Astrocyte of the cerebellum (primary cell): ENCODE measurements at regions of chr5 and their contacts with region 1.

Region 1: GRCh38 chr5:96876292-96876850 is at the start of gene ERAP2:
- DNase-seq: peak; percentile 12
- H3K4me3 ChIP-seq: peak within 1 kb of the TSS; percentile 36
- CTCF ChIP-seq: no peak

Region 2: DNA sequence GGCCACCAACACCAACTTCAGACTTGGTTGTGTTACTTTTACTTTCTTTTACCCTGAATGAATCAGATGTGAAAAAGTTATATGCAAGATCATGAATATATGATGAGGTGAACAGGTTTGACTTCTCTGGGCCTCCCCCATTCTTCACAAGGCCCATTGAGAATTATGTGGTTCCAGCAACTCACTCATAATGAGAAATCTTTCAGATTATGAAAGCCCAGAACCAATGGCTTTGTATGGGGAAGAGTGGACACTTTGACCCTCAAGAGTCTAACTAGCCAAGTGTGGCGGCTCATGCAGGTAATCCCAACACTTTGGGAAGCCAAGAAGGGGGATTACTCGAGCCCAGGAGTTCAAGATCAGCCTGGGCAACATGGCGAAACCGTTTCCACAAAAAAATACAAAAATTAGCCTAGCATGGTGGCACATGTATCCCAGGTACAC is 43.4 kb after region 1 on chr5:
- in situ Hi-C with region 1: loop called (anchors 5 kb)
- DNase-seq: no peak
- H3K4me3 ChIP-seq: no peak overlapping the region
- CTCF ChIP-seq: no peak

Region 3: GRCh38 chr5:97162045-97162444 is 285.7 kb after region 1 on chr5:
- in situ Hi-C with region 1: loop called (anchors 25 kb)
- DNase-seq: peak; percentile 81
- H3K4me3 ChIP-seq: no peak overlapping the region
- CTCF ChIP-seq: peak; percentile 87